Dendritic cell treated with granulocyte-macrophage colony-stimulating factor and Interleukin-4, amounts not matched to agents 40 ng/mL and 50 ng/mL, for 4 days (primary cell): ENCODE measurements at regions of chr11 and their contacts with region 1.

Region 1: GRCh38 chr11:119018074-119018938 is at the starts of genes RPS25 and TRAPPC4:
- H3K4me3 Mint-ChIP-seq: peak within 1 kb of the TSS; percentile 98
- H3K27ac Mint-ChIP-seq: peak within 1 kb of the TSS; percentile 99
- H3K4me1 Mint-ChIP-seq: peaks cover 31% of the 10 kb centered on the region
- H3K27me3 Mint-ChIP-seq: no peaks in the 10 kb centered on the region

Region 2: GRCh38 chr11:119030329-119031049 is 12.2 kb after region 1 on chr11 and contains the start of gene SLC37A4:
- intact Hi-C with region 1: loop called (anchors 1 kb)
- H3K4me3 Mint-ChIP-seq: peak within 1 kb of the TSS; percentile 86
- H3K27ac Mint-ChIP-seq: peak within 1 kb of the TSS; percentile 90
- H3K4me1 Mint-ChIP-seq: peaks cover 34% of the 10 kb centered on the region
- H3K27me3 Mint-ChIP-seq: peaks cover 2% of the 10 kb centered on the region

Region 3: GRCh38 chr11:119077839-119078238 is 59.5 kb after region 1 on chr11:
- intact Hi-C with region 1: no loop called
- H3K4me3 Mint-ChIP-seq: no peak overlapping the region
- H3K27ac Mint-ChIP-seq: no peak overlapping the region
- H3K4me1 Mint-ChIP-seq: peaks cover 25% of the 10 kb centered on the region
- H3K27me3 Mint-ChIP-seq: no peaks in the 10 kb centered on the region